ENCODE measurements at regions of chr1 and their contacts with region 1.

Region 1: DNA sequence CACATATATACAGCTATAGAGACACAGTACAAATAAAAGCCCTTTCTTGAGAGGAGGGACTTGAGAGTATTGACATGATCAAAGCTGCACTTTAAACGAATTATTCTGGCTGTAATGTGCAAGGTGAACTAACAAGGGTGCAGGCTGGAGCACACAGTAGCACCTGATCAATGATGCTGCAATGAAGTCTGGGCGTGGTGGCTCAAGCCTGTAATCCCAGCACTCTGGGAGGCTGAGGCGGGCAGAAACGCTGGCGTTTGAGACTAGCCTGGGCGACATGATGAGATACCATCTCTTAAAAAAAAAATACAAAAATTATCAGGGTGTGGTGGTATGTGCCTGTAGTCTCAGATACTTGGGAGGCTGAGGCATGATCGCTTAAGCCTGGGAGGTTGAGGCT is 14.1 kb upstream of the CTH start:
- DNase-seq: no peak
- ATAC-seq: no peak
- H3K4me3 ChIP-seq: no peak overlapping the region
- H3K4me3 Mint-ChIP-seq: no peak overlapping the region
- H3K27ac ChIP-seq: no peak overlapping the region
- H3K27ac Mint-ChIP-seq: no peak overlapping the region
- H3K4me1 ChIP-seq: no peaks in the 10 kb centered on the region
- H3K4me1 Mint-ChIP-seq: no peaks in the 10 kb centered on the region
- H3K27me3 ChIP-seq: peaks cover 0 to 2% of the 10 kb centered on the region in 2 experiments
- H3K27me3 Mint-ChIP-seq: peaks cover 11% of the 10 kb centered on the region
- CTCF ChIP-seq: no peak

Region 2: DNA sequence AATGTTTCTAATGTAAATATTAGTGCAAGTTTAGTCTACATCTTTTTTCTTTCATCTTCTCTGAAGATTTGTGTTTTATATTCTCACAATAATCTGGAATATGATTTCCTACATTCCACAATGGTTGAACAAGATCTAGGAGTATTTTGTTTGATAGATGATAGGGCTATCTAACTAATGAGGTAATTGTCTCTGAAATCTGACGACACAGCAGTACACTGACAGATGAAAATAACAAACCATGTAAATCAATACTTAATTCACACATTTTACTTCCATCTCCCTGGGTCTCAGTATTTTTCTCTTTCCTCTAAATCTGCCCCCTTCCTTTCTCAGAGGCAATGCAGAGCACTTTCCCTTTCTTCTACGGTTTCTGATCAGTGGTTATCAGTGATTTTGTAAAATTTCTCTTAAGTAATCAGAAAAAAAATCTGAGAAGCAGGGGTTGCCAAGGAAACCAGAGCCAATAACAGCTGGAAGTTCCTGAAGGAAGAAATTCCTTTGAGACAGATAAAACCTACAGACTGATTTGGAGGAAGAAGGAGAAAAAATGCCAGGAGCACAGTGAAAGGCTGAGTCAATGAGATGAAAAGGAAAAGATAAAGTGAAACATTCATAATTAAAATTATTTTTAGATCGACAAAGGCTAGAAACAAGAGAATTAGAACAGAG is 35.2 kb before region 1 on chr1:
- CTCF ChIA-PET with region 1: no interaction called
- POLR2A ChIA-PET with region 1: no interaction called
- intact Hi-C with region 1: loop called in 1 of 2 experiments (anchors 2 kb)
- DNase-seq: no peak
- ATAC-seq: no peak
- H3K4me3 ChIP-seq: no peak overlapping the region
- H3K4me3 Mint-ChIP-seq: no peak overlapping the region
- H3K27ac ChIP-seq: no peak overlapping the region
- H3K27ac Mint-ChIP-seq: no peak overlapping the region
- H3K4me1 ChIP-seq: no peaks in the 10 kb centered on the region
- H3K4me1 Mint-ChIP-seq: peaks cover 7% of the 10 kb centered on the region
- H3K27me3 ChIP-seq: no peaks in the 10 kb centered on the region
- H3K27me3 Mint-ChIP-seq: no peaks in the 10 kb centered on the region
- CTCF ChIP-seq: no peak

Region 3: DNA sequence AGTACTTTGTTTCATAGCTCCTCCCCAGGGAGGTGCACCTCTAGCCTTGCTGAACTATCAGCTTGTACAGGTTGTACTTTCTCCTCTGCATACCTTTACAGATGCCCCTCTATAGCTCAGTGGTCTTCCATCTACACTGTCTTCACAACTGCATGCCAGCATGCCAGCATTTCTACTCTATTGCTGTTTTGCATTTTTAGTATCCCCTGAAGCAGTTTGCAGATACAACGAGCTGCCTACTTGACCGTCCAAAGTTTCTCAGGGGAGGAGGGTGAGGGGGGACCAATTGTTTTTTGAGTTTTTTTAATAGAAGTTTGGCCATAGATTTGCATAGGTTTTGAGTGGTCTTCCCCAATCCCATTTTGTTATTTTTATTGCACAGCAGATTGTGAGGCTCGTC is 13.5 kb before region 1 on chr1:
- CTCF ChIA-PET with region 1: no interaction called
- POLR2A ChIA-PET with region 1: no interaction called
- intact Hi-C with region 1: no loop called
- DNase-seq: no peak
- ATAC-seq: no peak
- H3K4me3 ChIP-seq: no peak overlapping the region
- H3K4me3 Mint-ChIP-seq: no peak overlapping the region
- H3K27ac ChIP-seq: no peak overlapping the region
- H3K27ac Mint-ChIP-seq: no peak overlapping the region
- H3K4me1 ChIP-seq: no peaks in the 10 kb centered on the region
- H3K4me1 Mint-ChIP-seq: no peaks in the 10 kb centered on the region
- H3K27me3 ChIP-seq: no peaks in the 10 kb centered on the region
- H3K27me3 Mint-ChIP-seq: peaks cover 9% of the 10 kb centered on the region
- CTCF ChIP-seq: no peak

Region 4: GRCh38 chr1:70438529-70438928 is 41.5 kb after region 1 on chr1:
- CTCF ChIA-PET with region 1: no interaction called
- POLR2A ChIA-PET with region 1: no interaction called
- intact Hi-C with region 1: loop called in 1 of 2 experiments (anchors 1 kb)
- DNase-seq: no peak
- ATAC-seq: no peak
- H3K4me3 ChIP-seq: no peak overlapping the region
- H3K4me3 Mint-ChIP-seq: no peak overlapping the region
- H3K27ac ChIP-seq: no peak overlapping the region
- H3K27ac Mint-ChIP-seq: no peak overlapping the region
- H3K4me1 ChIP-seq: no peaks in the 10 kb centered on the region
- H3K4me1 Mint-ChIP-seq: no peaks in the 10 kb centered on the region
- H3K27me3 ChIP-seq: no peaks in the 10 kb centered on the region
- H3K27me3 Mint-ChIP-seq: no peaks in the 10 kb centered on the region
- CTCF ChIP-seq: no peak

Region 5: DNA sequence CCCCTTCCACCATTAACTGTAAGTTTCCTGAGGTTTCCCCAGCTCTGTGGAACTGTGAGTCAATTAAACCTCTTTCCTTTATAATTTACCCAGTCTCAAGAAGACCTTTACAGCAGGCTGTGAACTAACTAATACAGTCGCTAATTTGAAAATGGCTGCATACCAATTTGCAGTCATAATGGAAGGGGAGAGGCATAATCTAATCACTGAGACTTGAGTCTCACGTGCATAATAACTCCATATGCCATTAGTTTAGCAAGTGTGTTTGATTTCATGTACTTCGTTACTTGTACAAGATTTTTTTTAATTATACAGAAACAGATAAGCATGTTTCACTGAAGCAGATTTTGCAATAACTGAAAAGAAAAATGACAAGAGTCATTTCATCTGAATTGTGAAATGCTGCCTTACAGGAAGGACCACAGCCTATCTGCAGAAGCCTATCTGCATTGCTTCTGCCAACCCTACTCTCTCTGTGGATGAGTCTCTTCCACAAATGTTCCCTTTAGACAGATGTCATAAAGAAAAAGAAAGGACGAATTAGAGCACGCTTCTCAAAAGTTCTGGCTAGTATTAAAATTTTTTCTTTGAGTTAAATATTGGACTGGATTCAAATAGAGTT is 551.5 kb after region 1 on chr1:
- CTCF ChIA-PET with region 1: no interaction called
- POLR2A ChIA-PET with region 1: no interaction called
- intact Hi-C with region 1: no loop called
- DNase-seq: no peak
- ATAC-seq: no peak
- H3K4me3 ChIP-seq: no peak overlapping the region
- H3K4me3 Mint-ChIP-seq: no peak overlapping the region
- H3K27ac ChIP-seq: no peak overlapping the region
- H3K27ac Mint-ChIP-seq: no peak overlapping the region
- H3K4me1 ChIP-seq: no peaks in the 10 kb centered on the region
- H3K4me1 Mint-ChIP-seq: no peaks in the 10 kb centered on the region
- H3K27me3 ChIP-seq: no peaks in the 10 kb centered on the region
- H3K27me3 Mint-ChIP-seq: peaks cover 3% of the 10 kb centered on the region
- CTCF ChIP-seq: no peak